ENCODE measurements at regions of chr7 and their contacts with region 1.

Region 1: DNA sequence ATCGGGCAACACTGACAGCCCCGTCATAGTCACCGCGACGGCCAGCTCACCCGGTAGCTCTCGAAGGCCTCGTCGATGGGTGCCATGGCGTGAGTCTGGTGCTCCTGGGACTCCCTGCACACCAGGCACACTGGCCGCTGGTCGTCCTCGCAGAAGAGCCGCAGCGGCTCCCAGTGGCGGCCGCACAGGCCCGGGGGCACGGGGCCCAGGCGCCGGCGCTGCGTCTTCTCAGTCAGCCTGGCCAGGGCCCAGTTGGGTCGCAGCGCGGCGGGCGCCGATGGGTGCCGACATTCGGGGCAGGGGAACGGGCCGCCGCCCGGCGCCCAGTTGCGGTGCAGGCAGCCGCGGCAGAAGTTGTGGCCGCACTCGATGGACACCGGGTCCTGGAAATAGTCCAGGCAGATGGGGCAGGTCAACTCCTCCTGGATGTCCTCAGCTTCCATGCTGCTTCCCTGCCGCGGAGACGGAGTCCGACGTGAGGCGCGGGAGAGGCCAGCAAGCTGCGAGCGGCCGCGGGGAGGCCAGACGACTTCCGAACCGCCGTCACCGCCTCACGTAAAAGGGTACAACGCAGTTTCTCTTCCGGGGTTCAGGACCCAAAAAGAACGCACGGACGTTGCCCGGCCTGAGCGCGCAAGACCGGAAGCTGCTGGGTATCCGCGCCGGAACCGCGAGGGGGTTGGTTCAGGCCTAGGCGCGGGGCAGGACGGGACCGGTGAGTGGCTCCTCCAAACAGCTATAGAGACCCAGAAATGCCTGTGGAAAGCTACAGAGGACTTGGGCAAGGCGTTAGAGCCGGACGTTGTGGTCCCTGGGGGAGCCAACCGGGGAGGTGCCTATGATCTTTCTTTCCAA is at the start of gene TRIM4:
- DNase-seq: peak; percentile 95 to 96
- ATAC-seq: peak; percentile 98
- H3K4me3 ChIP-seq: peak within 1 kb of the TSS; percentile 63 to 81
- H3K27ac ChIP-seq: peak within 1 kb of the TSS; percentile 17 to 61
- H3K4me1 ChIP-seq: peaks cover 0 to 3% of the 10 kb centered on the region in 2 donors
- H3K27me3 ChIP-seq: no peaks in the 10 kb centered on the region
- total RNA-seq, gene TRIM4: 24.7 to 33.4 TPM

Region 2: GRCh38 chr7:99719996-99720769 is 199.0 kb before region 1 on chr7:
- intact Hi-C with region 1: no loop called
- DNase-seq: no peak
- ATAC-seq: no peak
- H3K4me3 ChIP-seq: no peak overlapping the region
- H3K27ac ChIP-seq: no peak overlapping the region
- H3K4me1 ChIP-seq: no peaks in the 10 kb centered on the region
- H3K27me3 ChIP-seq: no peaks in the 10 kb centered on the region

Region 3: DNA sequence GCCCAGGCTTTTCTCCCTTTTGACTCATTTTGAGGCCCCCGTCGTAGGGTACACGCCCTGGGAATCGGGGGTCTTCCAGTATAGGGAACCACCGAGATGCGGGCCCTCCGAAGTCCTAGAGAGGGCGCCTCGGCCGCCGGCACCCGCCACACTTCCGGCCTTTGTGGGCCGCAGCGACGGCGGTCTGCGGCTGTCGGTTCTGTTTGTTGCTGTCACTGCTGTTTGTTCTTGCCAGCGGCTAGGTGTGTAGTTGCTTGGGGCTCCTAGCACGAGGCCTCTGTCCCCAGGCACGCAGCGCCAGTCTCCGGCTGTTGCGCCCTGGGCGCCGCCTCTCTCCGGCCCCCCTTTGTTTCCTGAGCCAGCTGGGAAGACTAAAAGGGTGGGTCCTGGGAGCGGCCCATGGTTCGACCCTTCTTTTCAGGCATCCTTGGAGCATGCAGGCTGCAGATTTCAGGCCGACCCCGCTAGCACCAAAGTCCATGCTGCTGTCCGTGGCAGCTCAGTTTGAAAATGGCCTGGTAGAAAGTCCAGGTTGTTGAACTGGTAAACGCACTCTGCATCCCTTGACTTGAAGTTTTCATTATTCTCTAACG is 78.5 kb after region 1 on chr7:
- intact Hi-C with region 1: loop called (anchors 5 to 10 kb)
- DNase-seq: peak; percentile 66 to 82
- ATAC-seq: peak; percentile 73
- H3K4me3 ChIP-seq: peak overlapping the region; percentile 5 to 23
- H3K27ac ChIP-seq: peak overlapping the region in 1 of 2 donors; percentile 0
- H3K4me1 ChIP-seq: no peaks in the 10 kb centered on the region
- H3K27me3 ChIP-seq: no peaks in the 10 kb centered on the region

Region 4: DNA sequence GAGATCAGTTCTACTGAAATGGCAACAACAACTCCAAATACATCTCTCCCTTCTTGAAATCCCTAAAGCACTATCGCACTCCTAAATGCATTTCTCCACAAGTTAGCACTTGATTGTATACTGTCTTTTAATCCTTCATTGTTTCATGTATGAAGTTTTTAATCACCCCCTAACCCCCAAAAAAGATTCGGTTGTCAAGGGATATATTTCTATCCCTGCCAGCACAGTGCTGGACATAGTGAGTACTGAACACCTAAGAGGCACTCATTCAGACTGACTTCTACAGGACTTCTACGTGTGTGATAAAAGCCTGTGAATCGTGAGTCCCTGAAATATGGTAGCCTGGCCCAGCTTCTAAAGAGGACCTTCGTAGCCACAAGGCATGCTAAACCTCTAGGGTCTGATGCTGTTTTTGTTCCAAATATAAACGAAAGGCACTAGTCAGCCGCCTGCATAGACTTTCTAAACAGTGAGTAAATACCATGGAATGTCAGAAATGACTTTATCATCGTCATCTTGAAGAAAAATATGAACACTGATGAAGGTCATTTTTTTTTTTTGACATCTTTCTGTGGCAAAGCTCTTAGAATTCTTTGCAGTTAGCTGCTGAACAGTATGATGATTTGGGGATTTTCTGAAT is 115.8 kb after region 1 on chr7:
- intact Hi-C with region 1: no loop called
- DNase-seq: no peak
- ATAC-seq: no peak
- H3K4me3 ChIP-seq: no peak overlapping the region
- H3K27ac ChIP-seq: peak overlapping the region in 1 of 2 donors; percentile 25
- H3K4me1 ChIP-seq: no peaks in the 10 kb centered on the region
- H3K27me3 ChIP-seq: no peaks in the 10 kb centered on the region

Measured in aorta (tissue), 5 donors.